MCF 10A (cell line): ENCODE measurements at regions of chr11 and their contacts with region 1.

Region 1: DNA sequence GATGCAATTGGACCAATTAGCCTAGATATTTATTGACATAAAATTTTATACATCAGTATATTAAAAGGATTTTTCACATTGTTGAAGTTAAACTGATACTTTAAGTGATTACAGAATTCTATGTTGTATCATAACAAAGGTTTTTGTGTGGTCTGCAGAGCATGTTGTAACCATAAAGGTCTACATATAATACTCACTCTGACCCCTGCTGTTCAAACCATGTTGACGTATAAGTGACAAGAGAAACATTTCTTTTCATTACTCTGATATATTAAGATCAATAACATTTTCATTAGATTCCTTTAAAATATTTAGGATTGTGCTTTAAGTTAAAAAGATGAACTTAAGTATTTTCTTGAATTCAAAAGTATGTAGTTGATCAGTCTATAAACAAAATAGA is 63.9 kb downstream of the GAS2 start:
- DNase-seq: peak; percentile 26
- H3K4me3 Mint-ChIP-seq: no peak overlapping the region
- H3K27ac Mint-ChIP-seq: no peak overlapping the region
- H3K4me1 Mint-ChIP-seq: no peaks in the 10 kb centered on the region
- H3K27me3 Mint-ChIP-seq: peaks cover 37% of the 10 kb centered on the region
- CTCF ChIP-seq: peak; percentile 10

Region 2: GRCh38 chr11:22337596-22338485 is 392.5 kb before region 1 on chr11 and contains the start of gene SLC17A6:
- CTCF ChIA-PET with region 1: no interaction called
- POLR2A ChIA-PET with region 1: no interaction called
- intact Hi-C with region 1: loop called (anchors 1 kb)
- DNase-seq: peak; percentile 65
- H3K4me3 Mint-ChIP-seq: no peak within 1 kb of the TSS
- H3K27ac Mint-ChIP-seq: no peak within 1 kb of the TSS
- H3K4me1 Mint-ChIP-seq: no peaks in the 10 kb centered on the region
- H3K27me3 Mint-ChIP-seq: peaks cover 71% of the 10 kb centered on the region
- CTCF ChIP-seq: no peak
- total RNA-seq, gene SLC17A6: not detected in 2 replicates

Region 3: DNA sequence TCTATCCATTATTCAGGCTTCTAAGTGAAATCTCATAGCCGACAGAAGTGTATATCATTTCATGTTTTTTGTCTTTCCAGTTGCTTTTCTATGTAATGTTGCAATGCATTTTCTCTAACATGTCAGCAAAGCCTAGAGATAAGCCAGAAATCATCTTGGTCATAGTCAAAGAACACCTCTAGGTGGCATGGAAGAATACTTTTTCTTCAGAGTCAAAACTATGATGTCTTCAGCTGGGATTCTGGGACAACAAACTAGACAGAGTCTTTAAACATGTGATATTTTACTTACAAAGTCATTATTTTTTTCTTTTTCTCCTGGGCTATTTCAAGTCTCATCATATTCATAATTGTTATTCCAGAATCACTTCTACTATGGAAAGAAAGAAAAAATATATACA is 59.5 kb before region 1 on chr11:
- CTCF ChIA-PET with region 1: no interaction called
- POLR2A ChIA-PET with region 1: no interaction called
- intact Hi-C with region 1: loop called (anchors 2 kb)
- DNase-seq: peak; percentile 25
- H3K4me3 Mint-ChIP-seq: no peak overlapping the region
- H3K27ac Mint-ChIP-seq: no peak overlapping the region
- H3K4me1 Mint-ChIP-seq: no peaks in the 10 kb centered on the region
- H3K27me3 Mint-ChIP-seq: peaks cover 96% of the 10 kb centered on the region
- CTCF ChIP-seq: peak; percentile 23

Region 4: GRCh38 chr11:22749536-22749935 is 19.2 kb after region 1 on chr11:
- CTCF ChIA-PET with region 1: no interaction called
- POLR2A ChIA-PET with region 1: no interaction called
- intact Hi-C with region 1: no loop called
- DNase-seq: no peak
- H3K4me3 Mint-ChIP-seq: no peak overlapping the region
- H3K27ac Mint-ChIP-seq: no peak overlapping the region
- H3K4me1 Mint-ChIP-seq: no peaks in the 10 kb centered on the region
- H3K27me3 Mint-ChIP-seq: peaks cover 97% of the 10 kb centered on the region
- CTCF ChIP-seq: no peak